Right cardiac atrium (tissue), 5 donors: ENCODE measurements at regions of chr17 and their contacts with region 1.

Region 1: DNA sequence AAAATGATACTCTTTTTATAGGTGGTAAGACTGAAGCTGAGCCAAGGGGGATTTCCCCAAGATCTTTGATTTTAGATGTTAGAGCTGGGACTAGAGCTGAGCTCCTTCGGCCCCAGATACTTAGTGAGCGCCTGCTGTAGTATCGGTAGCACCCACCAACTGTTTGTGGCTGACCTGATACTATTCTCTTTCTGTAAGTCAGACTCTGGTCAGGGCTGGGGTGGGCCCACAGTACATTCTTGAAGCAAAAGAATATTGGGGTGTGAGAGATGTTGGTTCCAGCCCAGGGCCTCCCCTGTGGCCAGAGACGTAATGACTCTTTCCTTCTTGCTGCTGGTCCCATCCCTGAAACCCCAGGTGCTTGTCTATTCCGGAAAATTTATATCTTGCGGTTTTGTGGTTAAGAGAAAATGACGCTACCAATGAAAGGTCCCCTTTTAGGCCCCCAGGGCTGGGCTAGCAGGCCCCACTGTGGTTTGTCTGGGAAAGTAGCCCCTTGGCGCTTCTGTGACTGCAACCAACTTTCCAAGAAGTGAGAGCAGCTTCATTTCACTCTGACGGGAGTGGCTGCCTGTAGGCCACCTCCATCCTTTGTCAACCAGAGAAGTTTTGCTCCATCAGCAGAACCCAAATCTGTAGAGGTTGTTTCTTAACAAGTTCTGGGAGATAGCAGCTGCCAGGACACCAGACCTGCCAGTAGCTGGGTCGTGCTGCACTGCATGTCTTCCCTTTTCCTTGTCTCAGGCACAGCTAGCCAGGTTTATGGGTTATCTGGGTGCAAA is 86.4 kb upstream of the LGALS9 start:
- DNase-seq: peak in 2 of 3 donors; percentile 25 to 35
- ATAC-seq: no peak
- H3K4me3 ChIP-seq: no peak overlapping the region
- H3K27ac ChIP-seq: no peak overlapping the region
- H3K4me1 ChIP-seq: peaks cover 6% of the 10 kb centered on the region
- H3K27me3 ChIP-seq: no peaks in the 10 kb centered on the region

Region 2: GRCh38 chr17:27494192-27495091 is 50.1 kb before region 1 on chr17:
- intact Hi-C with region 1: loop called in 2 of 4 experiments (anchors 5 to 10 kb)
- DNase-seq: peak; percentile 90 to 92 (median 91)
- ATAC-seq: peak; percentile 90 to 96
- H3K4me3 ChIP-seq: no peak overlapping the region
- H3K27ac ChIP-seq: peak overlapping the region; percentile 82
- H3K4me1 ChIP-seq: peaks cover 11% of the 10 kb centered on the region
- H3K27me3 ChIP-seq: no peaks in the 10 kb centered on the region

Region 3: GRCh38 chr17:27622986-27623385 is 78.4 kb after region 1 on chr17:
- intact Hi-C with region 1: no loop called
- DNase-seq: peak in 2 of 3 donors; percentile 72 to 81
- ATAC-seq: peak in 1 of 2 donors; percentile 66
- H3K4me3 ChIP-seq: no peak overlapping the region
- H3K27ac ChIP-seq: no peak overlapping the region
- H3K4me1 ChIP-seq: no peaks in the 10 kb centered on the region
- H3K27me3 ChIP-seq: no peaks in the 10 kb centered on the region